Activated T-helper 1 cell treated with anti-CD3 and anti-CD28 coated beads, Interleukin-12 subunit alpha, Interleukin-12 subunit beta, Interleukin-2, Interleukin-4 antibody, amounts not matched to agents 30 ng/mL and 10 ng/mL and 1 ng/mL, durations not matched to agents 14 hours and 24 hours and 36 hours (primary cell): ENCODE measurements at regions of chr2 and their contacts with region 1.

Region 1: GRCh38 chr2:234550511-234551107 is 53.7 kb upstream of the ARL4C start:
- DNase-seq: peak; percentile 23
- H3K4me3 Mint-ChIP-seq: no peak overlapping the region
- H3K27ac Mint-ChIP-seq: no peak overlapping the region
- H3K4me1 Mint-ChIP-seq: peaks cover 5% of the 10 kb centered on the region
- H3K27me3 Mint-ChIP-seq: peaks cover 20% of the 10 kb centered on the region

Region 2: DNA sequence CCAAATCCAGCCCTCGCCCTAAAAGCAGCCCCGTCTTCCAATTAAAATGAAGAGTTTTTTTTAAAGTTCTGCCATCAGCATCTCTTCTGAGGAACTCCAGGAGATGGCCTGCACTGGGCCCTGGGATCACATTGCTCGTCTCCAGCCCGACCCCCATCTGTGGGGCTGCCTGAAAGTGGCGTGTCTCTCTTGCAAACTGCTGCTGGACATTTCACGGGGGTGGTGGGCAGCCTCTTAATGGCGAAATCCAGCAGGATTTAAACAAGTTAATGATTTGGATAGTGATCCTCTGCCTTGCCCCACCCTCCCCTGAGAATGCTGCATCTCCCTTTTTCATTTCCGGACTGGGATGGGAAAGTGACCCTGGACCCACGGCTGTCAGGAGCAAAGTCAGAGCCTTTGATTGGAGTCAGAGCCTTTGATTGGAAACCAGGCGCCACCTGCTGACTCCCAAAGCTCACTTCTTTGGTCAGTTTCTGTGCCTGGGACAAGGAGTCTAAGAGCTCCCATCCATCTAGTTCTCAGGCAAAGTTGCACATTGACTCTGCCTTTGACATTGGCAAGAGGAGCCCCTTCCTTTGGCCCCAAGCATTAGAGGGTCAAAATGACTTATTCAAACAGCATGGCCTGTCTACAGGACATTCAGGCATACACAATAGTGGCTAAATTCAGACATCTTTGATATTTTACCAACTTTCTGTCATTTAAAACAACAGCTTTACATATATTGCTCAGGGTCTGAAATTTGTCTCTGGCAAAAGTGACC is 556.4 kb after region 1 on chr2:
- intact Hi-C with region 1: loop called (anchors 2 kb)
- DNase-seq: no peak
- H3K4me3 Mint-ChIP-seq: no peak overlapping the region
- H3K27ac Mint-ChIP-seq: no peak overlapping the region
- H3K4me1 Mint-ChIP-seq: no peaks in the 10 kb centered on the region
- H3K27me3 Mint-ChIP-seq: peaks cover 4% of the 10 kb centered on the region

Region 3: GRCh38 chr2:235116885-235117492 is 566.4 kb after region 1 on chr2:
- intact Hi-C with region 1: loop called (anchors 1 kb)
- DNase-seq: no peak
- H3K4me3 Mint-ChIP-seq: no peak overlapping the region
- H3K27ac Mint-ChIP-seq: no peak overlapping the region
- H3K4me1 Mint-ChIP-seq: no peaks in the 10 kb centered on the region
- H3K27me3 Mint-ChIP-seq: peaks cover 8% of the 10 kb centered on the region